Dendritic cell treated with granulocyte-macrophage colony-stimulating factor and Interleukin-4, amounts not matched to agents 40 ng/mL and 50 ng/mL, for 4 days (primary cell): ENCODE measurements at regions of chr3 and their contacts with region 1.

Region 1: GRCh38 chr3:160038862-160039562 is 50.4 kb downstream of the IL12A start:
- H3K4me3 Mint-ChIP-seq: peak overlapping the region; percentile 66
- H3K27ac Mint-ChIP-seq: no peak overlapping the region
- H3K4me1 Mint-ChIP-seq: peaks cover 13% of the 10 kb centered on the region
- H3K27me3 Mint-ChIP-seq: peaks cover 33% of the 10 kb centered on the region

Region 2: GRCh38 chr3:160140756-160141155 is 101.7 kb after region 1 on chr3:
- intact Hi-C with region 1: loop called (anchors 10 kb)
- H3K4me3 Mint-ChIP-seq: no peak overlapping the region
- H3K27ac Mint-ChIP-seq: no peak overlapping the region
- H3K4me1 Mint-ChIP-seq: peaks cover 8% of the 10 kb centered on the region
- H3K27me3 Mint-ChIP-seq: peaks cover 10% of the 10 kb centered on the region

Region 3: GRCh38 chr3:160210799-160211221 is 171.8 kb after region 1 on chr3:
- intact Hi-C with region 1: loop called (anchors 10 kb)
- H3K4me3 Mint-ChIP-seq: no peak overlapping the region
- H3K27ac Mint-ChIP-seq: no peak overlapping the region
- H3K4me1 Mint-ChIP-seq: peaks cover 13% of the 10 kb centered on the region
- H3K27me3 Mint-ChIP-seq: peaks cover 2% of the 10 kb centered on the region